Dendritic cell treated with granulocyte-macrophage colony-stimulating factor and Interleukin-4, amounts not matched to agents 40 ng/mL and 50 ng/mL, for 4 days (primary cell): ENCODE measurements at regions of chr9 and their contacts with region 1.

Region 1: DNA sequence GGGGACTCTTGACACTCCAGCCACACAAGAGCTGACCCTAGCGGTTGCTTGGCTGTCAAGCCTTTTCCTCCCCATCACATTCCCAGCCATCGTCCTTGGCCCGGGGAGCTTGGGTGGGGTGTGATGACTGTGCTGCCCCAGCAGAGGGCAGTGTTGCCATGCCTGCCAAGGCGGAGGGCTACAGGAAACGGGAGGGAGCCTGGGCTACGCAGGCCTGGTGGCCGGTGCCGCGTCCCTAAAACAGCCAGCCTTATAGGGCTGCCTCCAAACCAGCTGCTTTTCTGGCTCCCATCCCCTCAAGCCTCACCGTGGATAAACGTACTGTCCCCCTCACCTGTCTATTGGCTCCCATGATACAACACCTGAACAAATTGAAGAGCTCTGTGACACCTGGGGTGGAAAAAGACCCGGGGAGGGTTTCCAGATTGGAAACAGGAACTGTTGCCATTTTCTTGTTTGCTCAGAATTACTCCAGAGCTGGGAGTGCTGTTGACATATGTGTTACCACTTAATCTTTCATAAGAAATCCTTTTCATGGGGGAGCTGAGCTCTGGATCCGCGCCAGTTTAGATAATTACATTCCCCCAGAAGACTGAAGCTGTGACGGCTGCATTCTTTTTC is 72.8 kb upstream of the ASTN2 start:
- H3K4me3 Mint-ChIP-seq: no peak overlapping the region
- H3K27ac Mint-ChIP-seq: no peak overlapping the region
- H3K4me1 Mint-ChIP-seq: no peaks in the 10 kb centered on the region
- H3K27me3 Mint-ChIP-seq: peaks cover 2% of the 10 kb centered on the region

Region 2: DNA sequence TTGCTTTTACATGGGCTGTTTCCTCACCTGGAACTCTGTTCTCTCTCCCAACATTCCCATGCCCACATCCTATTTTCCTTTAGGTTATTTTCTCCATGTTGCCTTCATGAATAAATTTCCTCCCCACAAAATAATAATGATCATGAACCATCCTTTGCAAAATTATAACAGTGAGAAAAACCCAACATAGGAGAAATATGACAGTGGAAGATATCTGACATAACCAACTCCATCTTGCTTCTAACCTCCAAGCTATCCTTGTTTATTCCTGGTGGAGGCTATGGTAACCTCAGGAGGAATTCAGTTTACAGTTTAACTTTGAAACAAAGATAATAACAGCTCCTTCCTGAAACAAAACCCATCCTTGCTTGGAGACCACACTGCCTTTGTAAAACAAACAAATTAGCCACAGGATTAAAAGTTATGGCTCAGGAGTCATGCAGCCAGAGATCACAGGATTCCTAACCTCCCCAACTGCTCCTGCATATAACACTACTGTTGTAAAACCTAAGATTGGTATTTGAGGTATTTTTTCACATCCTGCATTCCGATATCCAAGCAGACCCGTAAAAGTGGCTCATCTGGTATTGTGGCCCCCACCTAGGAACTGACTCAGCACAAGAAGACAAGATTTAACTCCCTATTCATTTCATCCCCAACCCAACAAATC is 588.2 kb before region 1 on chr9:
- intact Hi-C with region 1: no loop called
- H3K4me3 Mint-ChIP-seq: no peak overlapping the region
- H3K27ac Mint-ChIP-seq: no peak overlapping the region
- H3K4me1 Mint-ChIP-seq: no peaks in the 10 kb centered on the region
- H3K27me3 Mint-ChIP-seq: no peaks in the 10 kb centered on the region

Region 3: GRCh38 chr9:117448066-117448714 is 39.5 kb before region 1 on chr9:
- intact Hi-C with region 1: no loop called
- H3K4me3 Mint-ChIP-seq: no peak overlapping the region
- H3K27ac Mint-ChIP-seq: no peak overlapping the region
- H3K4me1 Mint-ChIP-seq: no peaks in the 10 kb centered on the region
- H3K27me3 Mint-ChIP-seq: no peaks in the 10 kb centered on the region

Region 4: DNA sequence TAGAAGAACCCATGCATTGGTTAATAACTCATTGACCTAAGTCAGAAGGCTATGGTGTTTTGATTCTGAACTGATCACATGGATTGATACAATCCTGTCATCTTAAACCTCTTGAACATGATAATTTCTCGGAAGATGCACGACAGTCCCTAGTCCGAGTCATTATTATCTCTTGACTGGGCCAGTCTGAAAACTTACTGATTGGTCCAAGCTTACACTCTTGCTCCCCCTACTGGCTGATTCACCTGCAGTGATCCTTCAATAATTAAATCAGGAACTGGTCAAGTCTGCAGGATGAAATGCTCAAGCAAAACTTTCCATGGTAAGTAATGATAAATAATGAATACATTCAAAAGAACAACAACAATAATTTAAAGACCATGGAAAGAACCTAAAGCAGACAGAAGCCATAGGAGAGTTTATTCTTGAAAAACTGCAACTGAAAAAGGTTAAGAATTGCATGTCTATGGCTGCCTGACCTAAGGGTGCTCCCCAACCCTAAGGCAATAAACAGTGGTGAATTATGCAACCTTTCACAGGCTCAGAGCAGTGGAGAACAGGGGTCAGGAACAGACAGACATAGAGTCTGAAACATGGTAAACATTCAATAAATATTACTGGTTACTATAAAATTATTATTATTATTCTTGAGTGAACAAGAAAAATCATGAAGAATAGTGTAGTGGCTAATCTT is 1802.2 kb after region 1 on chr9:
- intact Hi-C with region 1: loop called (anchors 5 kb)
- H3K4me3 Mint-ChIP-seq: no peak overlapping the region
- H3K27ac Mint-ChIP-seq: no peak overlapping the region
- H3K4me1 Mint-ChIP-seq: no peaks in the 10 kb centered on the region
- H3K27me3 Mint-ChIP-seq: peaks cover 4% of the 10 kb centered on the region